ENCODE measurements at regions of chr12 and their contacts with region 1.

Region 1: GRCh38 chr12:94435511-94435927 is 24.1 kb downstream of the CEP83 start:
- DNase-seq: no peak
- H3K4me3 ChIP-seq: no peak overlapping the region
- H3K27ac ChIP-seq: no peak overlapping the region
- H3K4me1 ChIP-seq: peaks cover 7 to 26% (median 12%) of the 10 kb centered on the region in 4 donors
- H3K27me3 ChIP-seq: no peaks in the 10 kb centered on the region
- CTCF ChIP-seq: no peak
- EP300 ChIP-seq: no peak
- POLR2A ChIP-seq: no peak

Region 2: DNA sequence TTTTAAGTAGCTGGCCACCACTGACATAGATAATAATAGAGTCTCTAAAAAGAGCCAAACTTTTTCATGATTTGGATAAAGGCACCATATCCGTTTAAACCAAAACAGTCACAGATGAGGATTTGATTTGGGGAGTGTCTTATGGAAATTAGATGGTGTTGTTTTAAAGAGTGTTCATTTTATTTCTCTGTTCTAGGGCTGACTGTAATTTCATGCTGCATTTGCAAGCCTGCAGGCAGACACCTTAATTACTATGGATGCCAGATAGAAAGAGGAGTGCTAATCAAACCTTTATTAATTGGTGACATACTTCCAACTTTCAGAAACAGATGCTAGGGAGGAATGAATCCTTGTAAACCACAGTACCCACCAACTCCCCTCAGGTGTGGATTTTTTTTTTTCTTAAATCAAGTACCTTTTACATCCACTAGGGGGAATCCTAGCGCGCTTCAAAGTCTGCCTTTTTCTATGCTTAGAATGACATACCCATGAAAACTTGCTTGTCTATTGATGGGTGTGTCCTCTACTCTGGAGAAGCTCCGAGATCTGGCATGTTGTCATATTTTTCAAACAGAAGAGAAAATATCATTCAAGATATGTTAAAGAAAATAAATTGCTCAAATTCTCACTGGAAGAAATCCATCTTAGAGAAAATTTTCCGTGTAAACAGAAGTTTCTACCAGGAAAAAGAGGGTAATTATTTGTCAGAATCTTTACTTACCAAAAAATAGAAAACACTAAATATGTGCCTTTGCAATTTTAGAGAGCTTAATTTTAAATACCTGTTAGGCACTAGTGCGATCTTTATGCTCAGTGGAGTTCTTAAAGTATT is 301.3 kb before region 1 on chr12:
- intact Hi-C with region 1: loop called (anchors 2 kb)
- DNase-seq: no peak
- H3K4me3 ChIP-seq: no peak overlapping the region
- H3K27ac ChIP-seq: no peak overlapping the region
- H3K4me1 ChIP-seq: no peaks in the 10 kb centered on the region
- H3K27me3 ChIP-seq: peaks cover 0 to 6% (median 0%) of the 10 kb centered on the region in 4 donors
- CTCF ChIP-seq: peak; percentile 68 to 81 (median 75)
- EP300 ChIP-seq: no peak
- POLR2A ChIP-seq: no peak

Region 3: GRCh38 chr12:94336211-94336925 is 99.2 kb before region 1 on chr12:
- intact Hi-C with region 1: loop called (anchors 10 kb)
- DNase-seq: no peak
- H3K4me3 ChIP-seq: no peak overlapping the region
- H3K27ac ChIP-seq: no peak overlapping the region
- H3K4me1 ChIP-seq: no peaks in the 10 kb centered on the region
- H3K27me3 ChIP-seq: no peaks in the 10 kb centered on the region
- CTCF ChIP-seq: no peak
- EP300 ChIP-seq: no peak
- POLR2A ChIP-seq: no peak

Measured in esophagus muscularis mucosa (tissue), 4 donors.